Heart right ventricle (tissue), 16 donors: ENCODE measurements at regions of chr7 and their contacts with region 1.

Region 1: GRCh38 chr7:19294619-19295018 is 149.4 kb upstream of the FERD3L start:
- DNase-seq: no peak
- ATAC-seq: no peak
- H3K4me3 ChIP-seq: no peak overlapping the region
- H3K27ac ChIP-seq: no peak overlapping the region
- H3K4me1 ChIP-seq: no peaks in the 10 kb centered on the region
- H3K27me3 ChIP-seq: no peaks in the 10 kb centered on the region
- CTCF ChIP-seq: no peak

Region 2: DNA sequence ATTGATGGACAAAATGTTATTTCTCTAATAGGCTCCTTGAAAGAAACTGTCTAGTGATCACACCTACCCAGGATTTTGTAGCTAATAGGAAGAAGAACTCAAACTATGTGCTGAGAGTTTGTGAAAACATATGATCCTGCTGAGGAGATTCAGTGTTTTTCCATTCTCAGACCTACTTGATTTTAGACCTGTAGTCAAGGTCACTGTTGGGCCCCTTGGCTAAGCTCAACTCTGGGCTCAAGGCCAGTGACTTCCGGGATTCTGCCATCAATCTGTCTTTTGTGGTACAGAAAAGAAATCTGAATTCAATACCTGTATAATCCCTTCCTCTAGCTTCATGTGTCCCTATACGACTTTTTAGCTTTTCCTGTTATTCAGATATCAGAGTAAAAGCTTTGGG is 69.7 kb before region 1 on chr7:
- intact Hi-C with region 1: no loop called
- DNase-seq: no peak
- ATAC-seq: no peak
- H3K4me3 ChIP-seq: no peak overlapping the region
- H3K27ac ChIP-seq: no peak overlapping the region
- H3K4me1 ChIP-seq: no peaks in the 10 kb centered on the region
- H3K27me3 ChIP-seq: no peaks in the 10 kb centered on the region
- CTCF ChIP-seq: no peak

Region 3: GRCh38 chr7:19336836-19337235 is 42.2 kb after region 1 on chr7:
- intact Hi-C with region 1: loop called in 1 of 10 experiments (anchors 5 kb)
- DNase-seq: no peak
- ATAC-seq: no peak
- H3K4me3 ChIP-seq: no peak overlapping the region
- H3K27ac ChIP-seq: no peak overlapping the region
- H3K4me1 ChIP-seq: no peaks in the 10 kb centered on the region
- H3K27me3 ChIP-seq: no peaks in the 10 kb centered on the region
- CTCF ChIP-seq: no peak